ENCODE measurements at regions of chr10 and their contacts with region 1.

Region 1: DNA sequence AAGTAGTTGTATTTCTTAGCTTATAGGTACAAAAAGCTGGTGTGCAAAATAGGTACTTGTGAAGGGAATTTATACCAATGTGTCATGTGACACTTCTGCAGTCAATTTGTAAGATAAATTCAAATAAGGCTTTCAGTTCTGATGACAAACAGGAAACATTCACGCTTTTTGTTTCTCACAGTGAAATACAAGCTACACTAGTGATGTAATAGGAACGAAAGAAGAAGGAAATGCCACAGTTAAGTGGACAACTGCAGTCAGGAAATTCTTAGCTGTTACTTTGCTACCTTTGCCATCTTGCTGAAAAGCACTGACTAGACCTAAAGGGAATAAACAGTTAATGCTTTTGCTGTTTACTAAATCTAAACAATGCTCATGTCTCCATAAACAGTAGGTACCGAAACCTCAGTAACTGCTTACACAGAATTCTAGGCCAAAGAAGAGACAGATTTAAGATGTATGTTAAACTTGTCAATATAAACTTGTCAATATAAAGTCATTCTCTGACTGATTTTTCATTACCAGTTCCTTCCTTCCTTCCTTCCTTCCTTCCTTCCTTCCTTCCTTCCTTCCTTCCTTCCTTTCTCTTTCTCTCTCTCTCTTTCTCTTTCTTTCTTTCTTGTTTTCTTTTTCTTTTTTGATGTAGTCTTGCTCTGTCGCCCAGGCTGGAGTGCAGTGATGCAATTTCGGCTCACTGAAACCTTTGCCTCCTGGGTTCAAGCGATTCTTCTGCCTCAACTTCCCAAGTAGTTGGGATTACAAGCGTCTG is 10.1 kb downstream of the OTUD1 start:
- DNase-seq: no peak
- ATAC-seq: peak; percentile 77
- H3K4me3 Mint-ChIP-seq: peak overlapping the region; percentile 77
- H3K27ac Mint-ChIP-seq: peak overlapping the region; percentile 93
- H3K4me1 Mint-ChIP-seq: peaks cover 78% of the 10 kb centered on the region
- H3K27me3 Mint-ChIP-seq: no peaks in the 10 kb centered on the region
- CTCF ChIP-seq: no peak

Region 2: GRCh38 chr10:23432639-23433038 is 16.3 kb before region 1 on chr10:
- CTCF ChIA-PET with region 1: no interaction called
- POLR2A ChIA-PET with region 1: interaction called, 137 read pairs
- intact Hi-C with region 1: loop called (anchors 1 kb)
- DNase-seq: no peak
- ATAC-seq: no peak
- H3K4me3 Mint-ChIP-seq: no peak overlapping the region
- H3K27ac Mint-ChIP-seq: peak overlapping the region; percentile 15
- H3K4me1 Mint-ChIP-seq: peaks cover 18% of the 10 kb centered on the region
- H3K27me3 Mint-ChIP-seq: no peaks in the 10 kb centered on the region
- CTCF ChIP-seq: no peak

Region 3: DNA sequence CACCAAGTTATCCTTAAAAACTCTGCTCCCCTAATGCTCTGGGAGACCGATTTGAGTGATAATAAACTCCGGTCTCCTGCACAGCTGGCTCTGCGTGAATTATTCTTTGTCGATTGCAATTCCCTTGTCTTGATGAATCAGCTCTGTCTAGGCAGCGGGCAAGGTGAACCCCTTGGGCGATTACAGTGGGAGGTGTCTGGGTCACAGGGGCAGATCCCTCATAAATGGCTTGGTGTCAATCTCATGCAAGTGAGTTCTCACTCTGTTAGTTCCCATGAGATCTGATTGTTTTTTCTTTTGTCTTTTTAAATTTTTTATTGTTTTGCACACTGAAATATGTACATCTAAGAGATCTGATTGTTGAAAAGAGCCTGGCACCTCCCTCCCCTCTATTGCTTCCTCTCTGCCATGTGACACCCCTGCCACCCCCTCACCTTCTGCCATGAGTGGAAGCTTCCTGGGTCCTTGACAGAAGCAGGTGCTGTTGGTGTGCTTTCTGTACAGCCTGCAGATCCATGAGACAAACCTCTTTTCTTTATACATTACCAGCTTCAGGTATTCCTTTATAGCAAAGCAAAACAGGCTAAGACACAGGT is 10.5 kb after region 1 on chr10:
- CTCF ChIA-PET with region 1: no interaction called
- POLR2A ChIA-PET with region 1: interaction called, 6 read pairs
- intact Hi-C with region 1: loop called (anchors 1 kb)
- DNase-seq: no peak
- ATAC-seq: no peak
- H3K4me3 Mint-ChIP-seq: no peak overlapping the region
- H3K27ac Mint-ChIP-seq: no peak overlapping the region
- H3K4me1 Mint-ChIP-seq: peaks cover 42% of the 10 kb centered on the region
- H3K27me3 Mint-ChIP-seq: no peaks in the 10 kb centered on the region
- CTCF ChIP-seq: no peak

Measured in activated B cell treated with CpG ODN at 0.5 μM for 24 hours (primary cell).